Motor neuron (in vitro differentiated cells): ENCODE measurements at regions of chr4 and their contacts with region 1.

Region 1: DNA sequence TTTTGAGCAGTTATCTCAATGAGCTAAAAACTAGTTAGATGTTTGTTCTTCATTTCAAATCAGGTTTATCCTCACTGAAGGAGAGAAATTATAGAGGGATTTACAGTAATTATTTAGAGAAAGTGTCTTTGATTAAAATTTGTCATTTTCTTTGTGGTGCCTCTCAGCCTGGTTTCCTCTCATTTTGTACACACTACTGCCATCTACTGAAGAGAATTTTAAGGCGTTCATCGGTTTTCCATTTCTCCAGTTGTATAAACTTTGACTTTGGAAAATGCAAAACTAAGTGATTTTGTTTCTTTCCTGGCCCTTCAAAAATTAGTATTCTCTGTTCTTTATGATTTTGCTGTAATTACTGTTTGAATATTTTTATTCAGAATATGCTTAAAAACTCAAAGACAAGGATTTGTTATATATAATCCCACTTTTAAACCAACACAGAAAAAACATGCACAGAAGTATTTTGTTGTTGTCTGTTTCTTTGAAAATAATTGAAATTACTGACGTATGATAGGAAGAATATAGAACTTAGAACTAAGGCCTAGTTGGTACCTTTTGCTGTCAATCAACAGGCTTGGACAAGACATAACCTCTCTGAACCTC is 34.4 kb upstream of the ANXA3 start:
- ATAC-seq: peak in 4 of 8 experiments; percentile 36 to 69 (median 54)
- H3K4me3 ChIP-seq: no peak overlapping the region
- H3K27ac ChIP-seq: no peak overlapping the region
- H3K4me1 ChIP-seq: no peaks in the 10 kb centered on the region

Region 2: GRCh38 chr4:77959566-77960338 is 557.4 kb before region 1 on chr4:
- in situ Hi-C with region 1: loop called in 2 of 9 experiments (anchors 25 kb)
- ATAC-seq: peak in 1 of 8 experiments; percentile 23
- H3K4me3 ChIP-seq: no peak overlapping the region
- H3K27ac ChIP-seq: no peak overlapping the region
- H3K4me1 ChIP-seq: peaks cover 0 to 5% of the 10 kb centered on the region in 2 donors

Region 3: DNA sequence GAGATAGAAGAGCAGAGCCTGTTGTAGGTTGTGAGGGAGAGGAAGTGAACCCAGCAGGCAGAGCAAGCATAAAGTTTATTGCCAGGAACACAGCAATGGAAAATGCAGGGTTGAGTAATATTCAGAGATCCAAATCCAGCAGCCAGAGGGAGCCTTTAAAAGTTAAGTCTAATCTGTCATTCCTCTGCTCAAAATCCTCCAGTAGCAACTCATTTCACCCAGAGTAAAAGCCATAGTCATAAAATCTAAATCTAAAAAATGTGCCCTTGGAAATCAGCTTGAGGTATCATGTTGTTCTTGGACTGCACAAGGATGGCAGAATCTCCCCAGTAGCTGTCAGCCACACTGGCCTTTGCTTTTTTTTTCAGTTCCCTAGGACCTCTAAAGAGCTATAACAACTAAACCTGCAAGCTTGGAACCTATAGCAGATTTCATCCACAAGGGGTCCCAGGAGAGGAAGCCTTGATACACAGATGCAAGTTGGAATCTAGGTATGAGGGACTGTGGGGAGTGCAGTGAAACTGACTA is 522.9 kb before region 1 on chr4:
- in situ Hi-C with region 1: loop called in 1 of 9 experiments (anchors 25 kb)
- ATAC-seq: peak; percentile 61 to 96 (median 84)
- H3K4me3 ChIP-seq: no peak overlapping the region
- H3K27ac ChIP-seq: no peak overlapping the region
- H3K4me1 ChIP-seq: peaks cover 0 to 12% of the 10 kb centered on the region in 2 donors

Region 4: DNA sequence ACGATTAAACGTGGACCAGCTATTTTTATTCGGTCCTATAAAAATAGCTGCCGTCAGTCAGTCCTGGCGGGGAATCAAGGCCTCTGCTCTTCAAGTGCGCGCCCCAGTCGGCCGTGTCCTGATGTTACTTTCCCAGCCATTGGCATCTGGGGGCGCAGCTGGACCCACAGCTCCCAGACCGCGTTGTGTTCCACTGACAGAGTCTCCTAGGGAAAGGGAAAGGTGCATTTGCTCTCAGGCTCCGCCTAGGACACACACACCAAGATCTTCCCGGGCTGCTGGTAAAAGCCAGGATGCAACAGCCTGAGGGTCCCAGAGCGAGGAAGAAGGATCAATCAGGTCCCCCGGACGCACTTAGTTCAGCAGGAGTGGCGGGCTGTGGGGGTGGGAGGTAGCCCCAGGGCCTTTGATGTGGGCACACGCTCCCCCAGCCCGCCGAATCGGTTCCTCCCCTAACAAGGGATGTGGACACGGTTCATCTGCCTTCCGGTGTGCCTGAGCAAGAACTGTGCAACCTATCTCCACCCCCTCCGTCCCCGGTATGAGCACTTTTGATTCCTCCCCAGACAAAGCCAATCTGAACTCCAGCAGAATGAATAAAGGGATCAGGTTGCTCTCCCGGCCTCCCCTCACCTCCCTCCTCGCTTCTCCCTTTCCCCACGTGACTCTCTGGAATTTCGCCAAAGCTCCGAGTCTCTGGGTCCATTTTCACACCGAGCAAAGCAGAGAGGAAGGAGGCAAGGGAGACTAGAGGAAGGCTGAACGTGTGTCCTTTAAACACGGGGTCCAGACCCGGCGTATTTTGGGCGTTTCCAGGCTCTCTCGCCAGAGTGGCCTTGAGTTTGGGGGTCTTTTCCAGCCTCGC is 460.7 kb before region 1 on chr4:
- in situ Hi-C with region 1: loop called in 1 of 9 experiments (anchors 25 kb)
- ATAC-seq: peak; percentile 61 to 79 (median 68)
- H3K4me3 ChIP-seq: peak overlapping the region; percentile 45 to 94 (median 53)
- H3K27ac ChIP-seq: peak overlapping the region; percentile 41 to 70
- H3K4me1 ChIP-seq: peaks cover 2 to 5% of the 10 kb centered on the region in 2 donors

Region 5: GRCh38 chr4:79273915-79274314 is 756.8 kb after region 1 on chr4:
- in situ Hi-C with region 1: no loop called
- ATAC-seq: peak in 5 of 8 experiments; percentile 9 to 88 (median 30)
- H3K4me3 ChIP-seq: no peak overlapping the region
- H3K27ac ChIP-seq: no peak overlapping the region
- H3K4me1 ChIP-seq: peaks cover 0 to 8% of the 10 kb centered on the region in 2 donors

Region 6: DNA sequence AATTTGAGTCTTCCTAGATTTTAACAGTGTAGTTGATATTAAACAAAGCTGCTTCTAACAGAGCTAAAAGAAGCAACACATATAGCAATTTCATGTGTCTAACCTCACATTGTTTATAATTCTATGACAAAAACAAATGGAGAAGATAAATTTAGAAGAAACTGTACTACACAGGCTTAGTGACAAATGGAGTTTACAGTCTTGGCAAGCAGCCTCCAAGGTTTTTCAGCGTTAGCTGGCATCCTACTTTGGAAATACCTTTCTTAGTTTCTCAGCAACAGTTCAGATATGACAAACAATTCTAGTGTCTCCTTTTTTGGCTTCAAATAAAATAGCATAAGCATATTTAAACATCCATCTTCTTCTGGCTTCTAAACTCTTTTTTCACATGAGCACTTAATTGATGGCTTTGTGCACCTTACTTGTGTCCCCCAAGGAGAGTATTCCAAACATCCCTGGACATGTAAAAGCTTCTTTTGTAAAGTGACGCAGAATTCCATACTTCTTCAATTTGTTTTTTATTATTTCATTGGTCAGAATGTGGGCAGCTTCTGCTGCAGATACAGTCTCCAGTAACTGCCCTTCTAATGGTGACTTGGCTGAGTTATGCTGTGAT is 1306.1 kb after region 1 on chr4:
- in situ Hi-C with region 1: no loop called
- ATAC-seq: peak in 1 of 8 experiments; percentile 82
- H3K4me3 ChIP-seq: no peak overlapping the region
- H3K27ac ChIP-seq: no peak overlapping the region
- H3K4me1 ChIP-seq: peaks cover 0 to 10% of the 10 kb centered on the region in 2 donors